CD4-positive, alpha-beta T cell (primary cell): ENCODE measurements at regions of chr17 and their contacts with region 1.

Region 1: GRCh38 chr17:75405365-75406221 is at the start of gene GRB2:
- DNase-seq: peak; percentile 99 to 100 (median 99)
- ATAC-seq: peak; percentile 79
- H3K4me3 ChIP-seq: peak within 1 kb of the TSS; percentile 100
- H3K4me3 Mint-ChIP-seq: peak within 1 kb of the TSS; percentile 99
- H3K27ac ChIP-seq: peak within 1 kb of the TSS; percentile 86 to 89
- H3K27ac Mint-ChIP-seq: peak within 1 kb of the TSS; percentile 87
- H3K4me1 ChIP-seq: peaks cover 33% of the 10 kb centered on the region
- H3K4me1 Mint-ChIP-seq: peaks cover 45% of the 10 kb centered on the region
- H3K27me3 ChIP-seq: no peaks in the 10 kb centered on the region
- H3K27me3 Mint-ChIP-seq: no peaks in the 10 kb centered on the region
- CTCF ChIP-seq: no peak
- total RNA-seq, gene GRB2: 88.8 to 92.6 TPM

Region 2: DNA sequence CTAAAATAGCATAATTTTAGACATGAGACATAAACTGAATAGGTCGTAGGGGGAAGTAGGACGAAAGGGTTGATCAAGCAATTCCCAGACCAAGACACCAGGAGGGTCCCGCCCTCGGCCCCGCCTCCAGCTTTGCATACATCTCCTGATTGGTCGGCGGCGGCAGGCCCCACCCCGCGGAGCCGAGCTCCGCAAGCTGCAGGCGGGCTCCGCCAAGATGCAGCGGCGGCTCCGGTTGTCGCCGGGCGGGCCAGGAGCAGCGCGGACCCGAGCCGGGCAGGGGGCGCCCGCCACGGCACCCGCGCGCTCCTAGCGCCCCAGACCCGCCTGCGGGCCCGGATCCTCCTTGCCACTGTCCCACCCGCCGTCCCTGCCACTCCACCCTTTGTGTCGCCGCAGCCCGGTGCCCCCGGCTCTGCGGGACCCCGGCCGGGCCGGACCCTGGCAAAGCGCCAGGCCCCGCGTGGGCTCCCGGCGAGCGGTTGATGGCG is 418.1 kb before region 1 on chr17 and contains the start of gene CDR2L:
- CTCF ChIA-PET with region 1: no interaction called
- POLR2A ChIA-PET with region 1: no interaction called
- intact Hi-C with region 1: loop called in 1 of 2 experiments (anchors 10 kb)
- DNase-seq: peak; percentile 80 to 97 (median 90)
- ATAC-seq: peak; percentile 97
- H3K4me3 ChIP-seq: peak within 1 kb of the TSS; percentile 55
- H3K4me3 Mint-ChIP-seq: peak within 1 kb of the TSS; percentile 85
- H3K27ac ChIP-seq: no peak within 1 kb of the TSS
- H3K27ac Mint-ChIP-seq: peak within 1 kb of the TSS; percentile 19
- H3K4me1 ChIP-seq: peaks cover 21% of the 10 kb centered on the region
- H3K4me1 Mint-ChIP-seq: peaks cover 15% of the 10 kb centered on the region
- H3K27me3 ChIP-seq: peaks cover 7 to 9% of the 10 kb centered on the region in 2 experiments
- H3K27me3 Mint-ChIP-seq: peaks cover 4% of the 10 kb centered on the region
- CTCF ChIP-seq: no peak
- total RNA-seq, gene CDR2L: 0.08 TPM in 1 of 2 experiments, not detected in the other

Region 3: GRCh38 chr17:75261336-75262111 is 144.1 kb before region 1 on chr17 and contains the starts of genes GGA3 and MRPS7:
- CTCF ChIA-PET with region 1: no interaction called
- POLR2A ChIA-PET with region 1: interaction called, 9 read pairs
- intact Hi-C with region 1: loop called in 1 of 2 experiments (anchors 1 kb)
- DNase-seq: peak; percentile 92 to 97 (median 95)
- ATAC-seq: peak; percentile 94
- H3K4me3 ChIP-seq: peak within 1 kb of the TSS; percentile 90
- H3K4me3 Mint-ChIP-seq: peak within 1 kb of the TSS; percentile 100
- H3K27ac ChIP-seq: peak within 1 kb of the TSS; percentile 94 to 96
- H3K27ac Mint-ChIP-seq: peak within 1 kb of the TSS; percentile 100
- H3K4me1 ChIP-seq: peaks cover 35% of the 10 kb centered on the region
- H3K4me1 Mint-ChIP-seq: peaks cover 58% of the 10 kb centered on the region
- H3K27me3 ChIP-seq: no peaks in the 10 kb centered on the region
- H3K27me3 Mint-ChIP-seq: no peaks in the 10 kb centered on the region
- CTCF ChIP-seq: no peak
- total RNA-seq, gene GGA3: 88.8 to 96.5 TPM
- total RNA-seq, gene MRPS7: 33.2 to 35.2 TPM

Region 4: GRCh38 chr17:75338335-75338734 is 67.3 kb before region 1 on chr17:
- CTCF ChIA-PET with region 1: interaction called, 4 read pairs
- POLR2A ChIA-PET with region 1: interaction called, 20 read pairs
- intact Hi-C with region 1: loop called in 1 of 2 experiments (anchors 5 kb)
- DNase-seq: peak in 3 of 14 experiments; percentile 44 to 56 (median 49)
- ATAC-seq: peak; percentile 54
- H3K4me3 ChIP-seq: peak overlapping the region; percentile 30
- H3K4me3 Mint-ChIP-seq: peak overlapping the region; percentile 59
- H3K27ac ChIP-seq: peak overlapping the region; percentile 38 to 47
- H3K27ac Mint-ChIP-seq: peak overlapping the region; percentile 81
- H3K4me1 ChIP-seq: peaks cover 79% of the 10 kb centered on the region
- H3K4me1 Mint-ChIP-seq: peaks cover 74% of the 10 kb centered on the region
- H3K27me3 ChIP-seq: no peaks in the 10 kb centered on the region
- H3K27me3 Mint-ChIP-seq: no peaks in the 10 kb centered on the region
- CTCF ChIP-seq: no peak

Region 5: DNA sequence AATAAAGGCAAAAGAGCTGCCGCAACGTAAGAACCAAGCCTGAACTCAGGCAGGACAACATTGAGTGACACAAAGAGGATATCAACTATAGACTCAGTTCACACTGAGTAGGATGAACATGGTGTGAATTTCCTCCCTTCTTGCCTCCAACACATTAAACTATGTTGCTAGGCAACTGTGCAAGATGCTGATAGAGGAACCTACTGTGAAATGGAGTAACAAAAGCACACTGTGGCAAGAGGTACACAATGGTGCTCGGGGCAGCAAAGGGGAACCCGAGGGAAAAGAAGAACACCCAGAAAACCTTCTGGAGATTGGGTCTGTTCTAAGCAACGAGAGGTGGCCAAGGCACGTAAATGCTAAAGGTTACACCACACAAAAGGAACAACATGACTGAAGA is 34.3 kb before region 1 on chr17:
- CTCF ChIA-PET with region 1: no interaction called
- POLR2A ChIA-PET with region 1: no interaction called
- intact Hi-C with region 1: no loop called
- DNase-seq: peak in 3 of 14 experiments; percentile 37 to 48 (median 40)
- ATAC-seq: peak; percentile 38
- H3K4me3 ChIP-seq: no peak overlapping the region
- H3K4me3 Mint-ChIP-seq: peak overlapping the region; percentile 47
- H3K27ac ChIP-seq: no peak overlapping the region
- H3K27ac Mint-ChIP-seq: peak overlapping the region; percentile 86
- H3K4me1 ChIP-seq: peaks cover 57% of the 10 kb centered on the region
- H3K4me1 Mint-ChIP-seq: peaks cover 79% of the 10 kb centered on the region
- H3K27me3 ChIP-seq: no peaks in the 10 kb centered on the region
- H3K27me3 Mint-ChIP-seq: no peaks in the 10 kb centered on the region
- CTCF ChIP-seq: no peak

Region 6: GRCh38 chr17:75393523-75394331 is 11.9 kb before region 1 on chr17:
- CTCF ChIA-PET with region 1: interaction called, 6 read pairs
- POLR2A ChIA-PET with region 1: interaction called, 16 read pairs
- intact Hi-C with region 1: loop called (anchors 1 kb)
- DNase-seq: peak; percentile 37 to 92 (median 77)
- ATAC-seq: peak; percentile 86
- H3K4me3 ChIP-seq: peak overlapping the region; percentile 68
- H3K4me3 Mint-ChIP-seq: peak overlapping the region; percentile 92
- H3K27ac ChIP-seq: peak overlapping the region; percentile 23 to 63
- H3K27ac Mint-ChIP-seq: peak overlapping the region; percentile 91
- H3K4me1 ChIP-seq: peaks cover 52% of the 10 kb centered on the region
- H3K4me1 Mint-ChIP-seq: peaks cover 88% of the 10 kb centered on the region
- H3K27me3 ChIP-seq: no peaks in the 10 kb centered on the region
- H3K27me3 Mint-ChIP-seq: no peaks in the 10 kb centered on the region
- CTCF ChIP-seq: no peak

Region 7: DNA sequence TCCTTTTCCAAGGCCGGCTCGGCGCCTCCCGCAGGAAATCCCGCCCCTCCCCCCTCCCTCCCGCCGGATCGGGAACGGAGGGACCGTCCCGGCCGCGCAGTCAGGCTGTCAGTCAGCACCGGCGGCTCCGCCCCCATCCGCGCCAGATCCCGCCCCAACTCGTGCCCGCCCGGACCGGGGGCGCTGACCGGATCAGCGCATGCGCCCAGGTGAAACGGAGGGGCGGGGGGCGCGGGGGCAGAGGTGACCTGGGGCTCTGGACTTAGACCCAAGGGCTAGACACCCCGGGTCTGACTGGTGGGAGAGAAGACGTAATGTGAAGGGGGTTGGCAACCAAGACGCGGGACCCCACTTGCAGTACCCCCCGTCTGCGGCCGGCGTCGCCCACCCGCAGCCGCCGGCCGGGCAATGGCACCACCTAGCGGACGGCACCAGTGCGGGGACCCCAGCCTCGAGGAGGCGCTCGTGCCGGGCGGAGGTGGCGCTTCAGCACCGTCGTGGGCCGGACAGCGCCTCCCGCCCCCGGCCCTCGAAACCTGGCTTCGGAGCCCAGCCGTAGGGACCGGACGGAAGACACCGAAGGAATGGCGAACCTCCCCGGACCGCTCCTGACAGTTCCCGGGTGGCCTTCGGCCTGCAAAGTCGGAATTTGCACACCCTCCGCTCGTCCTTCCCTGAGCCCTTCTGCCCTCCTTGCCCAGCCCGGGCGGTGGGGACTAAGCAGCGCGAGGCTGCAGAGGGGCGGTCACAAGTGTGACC is 110.1 kb after region 1 on chr17 and contains the start of gene CASKIN2:
- CTCF ChIA-PET with region 1: interaction called, 4 read pairs
- POLR2A ChIA-PET with region 1: interaction called, 12 read pairs
- intact Hi-C with region 1: loop called in 1 of 2 experiments (anchors 1 kb)
- DNase-seq: peak; percentile 49 to 89 (median 64)
- ATAC-seq: peak; percentile 52
- H3K4me3 ChIP-seq: peak within 1 kb of the TSS; percentile 80
- H3K4me3 Mint-ChIP-seq: peak within 1 kb of the TSS; percentile 86
- H3K27ac ChIP-seq: no peak within 1 kb of the TSS
- H3K27ac Mint-ChIP-seq: peak within 1 kb of the TSS; percentile 47
- H3K4me1 ChIP-seq: peaks cover 44% of the 10 kb centered on the region
- H3K4me1 Mint-ChIP-seq: peaks cover 27% of the 10 kb centered on the region
- H3K27me3 ChIP-seq: peaks cover 9 to 10% of the 10 kb centered on the region in 2 experiments
- H3K27me3 Mint-ChIP-seq: no peaks in the 10 kb centered on the region
- CTCF ChIP-seq: peak; percentile 88
- total RNA-seq, gene CASKIN2: 0.17 to 0.25 TPM